ENCODE measurements at regions of chr15 and their contacts with region 1.

Region 1: GRCh38 chr15:64731012-64731806 is 44.2 kb downstream of the RBPMS2 start:
- DNase-seq: peak in 1 of 2 donors; percentile 91
- H3K4me3 ChIP-seq: no peak overlapping the region
- H3K27ac ChIP-seq: no peak overlapping the region
- H3K4me1 ChIP-seq: no peaks in the 10 kb centered on the region
- H3K27me3 ChIP-seq: no peaks in the 10 kb centered on the region
- CTCF ChIP-seq: peak; percentile 83 to 97 (median 89)

Region 2: GRCh38 chr15:64667736-64668161 is 63.5 kb before region 1 on chr15:
- intact Hi-C with region 1: no loop called
- DNase-seq: no peak
- H3K4me3 ChIP-seq: no peak overlapping the region
- H3K27ac ChIP-seq: no peak overlapping the region
- H3K4me1 ChIP-seq: no peaks in the 10 kb centered on the region
- H3K27me3 ChIP-seq: no peaks in the 10 kb centered on the region
- CTCF ChIP-seq: no peak

Region 3: GRCh38 chr15:64686216-64686631 is 45.0 kb before region 1 on chr15:
- intact Hi-C with region 1: loop called (anchors 1 kb)
- DNase-seq: no peak
- H3K4me3 ChIP-seq: no peak overlapping the region
- H3K27ac ChIP-seq: no peak overlapping the region
- H3K4me1 ChIP-seq: peaks cover 0 to 5% of the 10 kb centered on the region in 2 donors
- H3K27me3 ChIP-seq: no peaks in the 10 kb centered on the region
- CTCF ChIP-seq: peak; percentile 68 to 80 (median 71)

Region 4: GRCh38 chr15:64749999-64750657 is 18.9 kb after region 1 on chr15:
- intact Hi-C with region 1: no loop called
- DNase-seq: no peak
- H3K4me3 ChIP-seq: no peak overlapping the region
- H3K27ac ChIP-seq: no peak overlapping the region
- H3K4me1 ChIP-seq: no peaks in the 10 kb centered on the region
- H3K27me3 ChIP-seq: no peaks in the 10 kb centered on the region
- CTCF ChIP-seq: no peak

Region 5: DNA sequence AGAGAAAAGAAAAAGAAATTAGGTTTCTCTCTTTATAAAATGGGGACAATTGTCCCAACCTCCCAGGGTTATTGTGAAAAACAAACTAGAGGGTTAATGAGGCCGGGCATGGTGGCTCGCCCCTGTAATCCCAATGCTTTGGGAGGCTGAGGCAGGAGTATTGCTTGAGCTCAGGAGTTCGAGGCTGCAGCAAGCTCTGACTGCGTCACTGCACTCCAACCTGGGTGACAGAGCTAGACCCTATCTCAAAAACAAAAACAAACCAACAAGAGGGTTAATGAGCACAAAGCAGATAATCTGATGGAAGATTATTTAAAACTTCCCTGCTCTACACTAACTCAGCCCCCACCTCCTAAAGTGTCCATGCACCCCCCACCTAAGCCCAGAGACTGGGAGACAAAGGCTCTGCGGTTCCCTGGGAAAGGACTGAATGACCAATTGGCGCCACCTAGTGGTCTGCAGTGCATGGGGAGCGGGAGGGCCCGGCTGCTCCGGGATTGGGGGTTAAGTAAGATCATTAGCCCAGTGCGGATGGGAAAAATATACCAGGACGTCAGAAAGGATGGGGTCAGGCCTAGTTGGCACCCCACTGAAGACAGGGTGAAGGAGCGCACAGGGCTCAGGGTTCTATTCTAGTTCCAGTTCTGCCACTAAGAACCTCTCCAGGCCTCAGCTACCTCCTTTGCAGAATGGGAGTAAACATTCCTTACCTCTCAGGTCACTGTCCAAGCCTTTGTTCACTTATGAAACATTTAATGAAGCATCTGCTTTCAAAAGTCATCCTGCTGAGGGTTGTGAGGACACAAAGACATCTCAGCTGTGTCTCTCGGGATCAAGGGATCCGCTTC is 78.7 kb after region 1 on chr15:
- intact Hi-C with region 1: loop called (anchors 1 kb)
- DNase-seq: peak in 1 of 2 donors; percentile 85
- H3K4me3 ChIP-seq: no peak overlapping the region
- H3K27ac ChIP-seq: no peak overlapping the region
- H3K4me1 ChIP-seq: peaks cover 0 to 3% of the 10 kb centered on the region in 2 donors
- H3K27me3 ChIP-seq: no peaks in the 10 kb centered on the region
- CTCF ChIP-seq: peak; percentile 76 to 94 (median 92)

Region 6: GRCh38 chr15:64905119-64905831 is 174.1 kb after region 1 on chr15:
- intact Hi-C with region 1: loop called (anchors 2 kb)
- DNase-seq: peak in 1 of 2 donors; percentile 84
- H3K4me3 ChIP-seq: peak overlapping the region; percentile 29 to 59
- H3K27ac ChIP-seq: no peak overlapping the region
- H3K4me1 ChIP-seq: no peaks in the 10 kb centered on the region
- H3K27me3 ChIP-seq: no peaks in the 10 kb centered on the region
- CTCF ChIP-seq: peak; percentile 88 to 90 (median 89)